ENCODE measurements at regions of chr7 and their contacts with region 1.

Region 1: DNA sequence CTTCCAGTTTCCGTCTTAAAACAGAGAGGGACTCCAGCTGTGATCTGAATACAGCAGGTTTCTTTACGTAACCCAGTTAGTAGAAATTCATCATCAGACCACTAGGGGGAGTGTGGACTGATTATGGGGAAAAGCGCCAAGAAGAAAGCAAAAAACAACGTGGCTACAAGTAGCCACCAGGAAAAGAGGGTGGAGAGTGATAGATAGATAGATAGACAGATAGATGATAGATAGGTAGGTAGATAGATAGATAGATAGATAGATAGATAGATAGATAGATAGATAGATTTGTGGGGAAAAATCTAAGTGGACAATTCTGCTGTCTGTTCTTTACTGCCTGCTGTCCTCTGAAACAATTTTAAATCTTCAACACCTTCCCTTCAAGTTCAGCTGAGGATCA is 12.7 kb upstream of the AKR1B10 start:
- DNase-seq: peak in 1 of 2 donors; percentile 84
- H3K4me3 ChIP-seq: no peak overlapping the region
- H3K27ac ChIP-seq: no peak overlapping the region
- H3K4me1 ChIP-seq: peaks cover 0 to 16% (median 10%) of the 10 kb centered on the region in 4 donors
- H3K27me3 ChIP-seq: no peaks in the 10 kb centered on the region
- CTCF ChIP-seq: peak in 6 of 7 experiments; percentile 63 to 91 (median 84)
- EP300 ChIP-seq: no peak
- POLR2A ChIP-seq: no peak

Region 2: DNA sequence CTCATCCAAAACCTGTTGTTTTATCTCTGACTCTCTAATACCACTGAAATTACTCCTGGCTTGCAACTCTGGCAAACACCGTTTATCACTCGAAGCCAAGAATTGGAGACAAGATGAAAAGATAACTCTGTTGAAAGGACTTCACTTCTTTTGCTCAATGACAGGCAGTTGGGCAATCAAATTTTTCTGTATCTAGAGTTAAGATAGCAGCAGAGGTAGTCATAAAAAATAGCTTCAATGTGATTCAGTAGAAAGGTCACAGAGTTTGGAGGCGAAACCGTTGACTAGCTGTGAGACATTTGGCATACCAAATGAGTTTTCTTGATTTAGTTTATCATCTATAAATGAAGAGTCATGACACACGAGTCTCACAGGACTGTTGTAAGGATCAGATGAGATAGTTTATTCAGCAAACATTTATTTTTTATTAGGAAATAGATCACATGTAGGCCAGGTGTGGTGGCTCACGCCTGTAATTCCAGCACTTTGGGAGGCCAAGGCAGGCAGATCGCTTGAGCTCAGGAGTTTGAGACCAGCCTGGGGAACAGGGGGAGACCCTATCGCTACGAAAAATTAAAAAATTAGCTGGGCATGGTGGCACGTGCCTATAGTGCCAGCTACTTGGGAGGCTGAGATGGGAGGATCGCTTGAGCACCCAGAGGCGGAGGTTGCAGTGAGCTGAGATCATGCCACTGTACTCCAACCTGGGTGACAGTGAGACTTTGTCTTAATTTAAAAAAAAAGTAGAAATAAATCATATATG is 79.3 kb before region 1 on chr7:
- intact Hi-C with region 1: loop called (anchors 5 kb)
- DNase-seq: no peak
- H3K4me3 ChIP-seq: no peak overlapping the region
- H3K27ac ChIP-seq: no peak overlapping the region
- H3K4me1 ChIP-seq: peaks cover 0 to 23% (median 16%) of the 10 kb centered on the region in 4 donors
- H3K27me3 ChIP-seq: no peaks in the 10 kb centered on the region
- CTCF ChIP-seq: no peak
- EP300 ChIP-seq: no peak
- POLR2A ChIP-seq: no peak

Measured in stomach (tissue), 19 donors.